HEK293 (cell line): ENCODE measurements at regions of chr10 and their contacts with region 1.

Region 1: DNA sequence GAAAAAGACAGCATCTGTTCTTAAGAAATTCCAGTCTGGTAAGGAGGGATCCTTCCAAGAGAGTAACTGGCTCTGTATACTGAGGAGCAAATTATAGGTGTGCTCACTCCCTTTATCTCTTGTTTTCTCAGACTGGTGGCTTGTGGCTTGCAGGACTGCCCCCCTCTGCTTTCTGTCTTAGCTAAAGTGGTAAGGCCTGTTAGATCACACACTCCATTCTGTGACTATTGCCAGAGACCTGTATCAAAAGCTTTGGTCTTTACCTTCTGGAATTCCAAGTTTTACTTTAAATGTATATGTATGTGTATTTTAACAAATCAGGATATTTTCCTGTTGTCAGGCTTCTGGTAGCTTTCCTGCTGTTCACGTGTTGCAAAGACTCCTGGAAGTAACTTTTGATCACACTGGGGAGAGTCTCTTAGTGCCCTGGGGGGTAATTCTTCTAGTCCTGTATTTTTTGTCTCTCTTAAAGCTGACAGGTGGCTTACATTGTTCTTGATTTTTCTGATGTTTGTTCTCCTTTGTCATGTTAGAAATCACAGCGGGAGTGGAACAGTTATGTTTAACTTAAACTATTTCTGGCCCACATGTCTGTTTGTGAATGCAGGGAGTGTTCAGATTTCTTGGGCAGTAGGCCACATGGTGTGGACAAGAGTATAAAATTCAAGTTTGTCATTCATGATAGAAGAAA is 99.0 kb downstream of the PLPP4 start:
- H3K4me3 ChIP-seq: no peak overlapping the region
- H3K27ac ChIP-seq: no peak overlapping the region
- H3K4me1 ChIP-seq: no peaks in the 10 kb centered on the region
- CTCF ChIP-seq: no peak

Region 2: DNA sequence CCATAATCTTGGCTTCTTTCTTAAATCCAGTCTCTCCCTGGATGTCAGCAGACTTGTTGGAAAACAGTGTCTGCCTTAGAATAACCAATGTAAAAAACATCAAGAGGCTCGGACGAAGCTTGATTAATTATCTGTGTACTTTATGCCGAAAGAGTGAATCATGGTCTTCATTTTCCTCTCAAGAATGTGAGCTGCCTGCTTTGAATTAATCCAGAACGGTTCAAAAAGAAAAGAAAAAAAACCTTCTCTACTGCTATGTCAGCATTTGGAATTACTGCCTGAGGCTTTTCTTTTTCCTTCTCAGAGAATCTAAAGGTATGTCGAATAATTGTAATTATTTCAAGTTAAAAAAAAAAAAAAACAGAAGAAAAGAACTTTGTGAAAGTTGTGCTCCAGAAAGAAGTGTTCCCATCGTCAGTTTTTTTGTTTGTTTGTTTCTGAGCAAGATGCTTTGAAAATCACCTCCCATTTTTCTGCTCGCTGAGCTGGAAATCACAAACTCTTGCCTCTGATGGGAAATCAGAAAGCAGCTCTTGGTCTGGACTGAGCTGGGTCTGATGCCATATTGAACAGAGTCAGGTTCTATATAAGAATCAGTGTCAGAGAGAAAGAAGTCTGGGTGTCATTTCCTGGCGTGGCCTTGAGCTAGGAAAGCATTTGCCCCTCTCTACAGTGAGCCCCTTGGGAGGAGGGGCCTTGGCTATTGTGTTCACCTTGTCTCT is 78.8 kb before region 1 on chr10:
- CTCF ChIA-PET with region 1: interaction called, 13 read pairs
- POLR2A ChIA-PET with region 1: no interaction called
- H3K4me3 ChIP-seq: no peak overlapping the region
- H3K27ac ChIP-seq: no peak overlapping the region
- H3K4me1 ChIP-seq: no peaks in the 10 kb centered on the region
- CTCF ChIP-seq: no peak